Dendritic cell treated with granulocyte-macrophage colony-stimulating factor and Interleukin-4, amounts not matched to agents 40 ng/mL and 50 ng/mL, for 4 days (primary cell): ENCODE measurements at regions of chr16 and their contacts with region 1.

Region 1: DNA sequence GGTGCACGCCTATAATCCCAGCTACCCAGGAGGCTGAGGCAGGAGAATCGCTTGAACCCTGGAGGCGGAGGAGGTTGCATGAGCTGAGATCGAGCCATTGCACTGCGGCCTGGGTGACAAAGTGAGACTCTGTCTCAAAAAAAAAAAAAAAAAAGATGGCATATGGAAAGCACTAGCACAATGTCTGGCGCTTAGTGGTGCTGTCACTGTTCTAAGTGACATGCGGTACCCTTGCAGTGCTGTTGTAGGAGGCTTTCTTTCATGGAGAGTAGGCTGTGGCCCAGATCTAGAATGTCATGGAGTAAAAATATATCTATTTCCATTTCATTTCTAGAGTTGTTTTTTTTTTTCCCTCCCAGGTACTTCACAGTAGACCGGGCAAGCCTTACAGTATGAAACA is 14.6 kb upstream of the METTL9 start:
- H3K4me3 Mint-ChIP-seq: no peak overlapping the region
- H3K27ac Mint-ChIP-seq: no peak overlapping the region
- H3K4me1 Mint-ChIP-seq: peaks cover 30% of the 10 kb centered on the region
- H3K27me3 Mint-ChIP-seq: peaks cover under 1% of the 10 kb centered on the region

Region 2: DNA sequence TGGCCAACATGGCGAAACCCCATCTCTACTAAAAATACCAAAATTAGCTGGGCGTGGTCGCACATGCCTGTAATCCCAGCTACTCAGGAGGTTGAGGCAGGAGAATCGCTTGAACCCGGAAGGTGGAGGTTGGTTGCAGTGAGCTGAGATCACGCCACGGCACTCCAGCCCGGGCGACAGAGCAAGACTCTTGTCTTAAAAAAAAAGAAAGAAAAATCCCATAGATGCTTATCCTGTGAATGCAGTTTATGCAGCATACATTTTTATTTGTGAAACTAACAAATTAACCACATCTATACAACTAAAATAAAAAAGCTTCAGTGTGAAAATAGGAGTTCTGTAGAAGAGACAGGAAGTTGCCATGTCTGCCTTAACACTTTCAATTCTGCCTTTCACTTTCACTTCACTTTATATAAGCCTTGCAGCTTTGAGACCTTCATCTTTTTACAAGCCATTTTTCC is 60.5 kb after region 1 on chr16:
- intact Hi-C with region 1: loop called (anchors 1 kb)
- H3K4me3 Mint-ChIP-seq: peak overlapping the region; percentile 68
- H3K27ac Mint-ChIP-seq: peak overlapping the region; percentile 85
- H3K4me1 Mint-ChIP-seq: peaks cover 57% of the 10 kb centered on the region
- H3K27me3 Mint-ChIP-seq: no peaks in the 10 kb centered on the region

Region 3: DNA sequence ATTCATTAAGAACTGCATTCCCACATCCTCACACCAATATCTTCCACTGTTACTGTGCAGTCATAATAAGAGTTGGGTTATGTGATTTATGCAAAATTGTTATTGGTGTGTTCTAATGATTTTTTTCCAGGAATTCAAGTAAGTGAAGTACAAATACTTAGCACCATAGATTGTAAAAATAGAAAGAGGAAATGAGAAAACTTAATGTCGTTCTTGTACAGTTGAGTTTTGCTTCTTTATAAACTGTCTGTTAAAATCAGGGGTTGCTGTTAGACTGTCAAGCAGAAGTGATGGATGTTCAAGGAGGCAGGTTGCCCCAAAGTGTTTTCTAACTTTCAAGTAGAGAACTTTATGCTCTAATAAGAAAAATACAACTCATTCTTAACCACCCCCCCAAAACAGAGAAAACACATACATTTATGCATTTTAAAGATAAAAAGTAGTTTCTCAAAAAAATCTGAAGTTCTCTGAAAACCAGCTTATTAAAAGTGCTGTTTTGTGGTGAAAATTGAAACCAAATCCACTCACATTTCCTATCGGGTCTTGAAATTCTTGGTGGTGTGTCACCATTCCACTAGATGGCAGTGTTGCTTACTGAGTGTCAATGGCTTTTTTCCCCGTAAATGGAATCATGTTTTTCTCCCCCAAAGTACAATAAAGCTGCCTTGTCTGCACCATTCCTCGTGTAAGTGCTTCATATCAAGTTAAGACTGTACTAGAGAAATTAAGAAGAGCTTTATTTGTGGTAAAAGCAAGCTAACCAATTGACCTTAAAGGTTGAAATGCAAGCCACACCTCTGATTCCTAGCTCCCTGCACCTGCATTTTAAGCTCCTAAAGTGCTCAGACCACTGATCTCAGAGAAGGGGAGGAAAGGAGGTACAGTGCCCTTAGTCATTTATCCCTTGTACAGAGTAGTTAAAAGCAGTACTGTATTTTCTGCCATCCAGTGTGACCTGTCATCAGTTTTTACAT is 72.3 kb after region 1 on chr16:
- intact Hi-C with region 1: no loop called
- H3K4me3 Mint-ChIP-seq: peak overlapping the region; percentile 17
- H3K27ac Mint-ChIP-seq: peak overlapping the region; percentile 70
- H3K4me1 Mint-ChIP-seq: peaks cover 77% of the 10 kb centered on the region
- H3K27me3 Mint-ChIP-seq: no peaks in the 10 kb centered on the region

Region 4: DNA sequence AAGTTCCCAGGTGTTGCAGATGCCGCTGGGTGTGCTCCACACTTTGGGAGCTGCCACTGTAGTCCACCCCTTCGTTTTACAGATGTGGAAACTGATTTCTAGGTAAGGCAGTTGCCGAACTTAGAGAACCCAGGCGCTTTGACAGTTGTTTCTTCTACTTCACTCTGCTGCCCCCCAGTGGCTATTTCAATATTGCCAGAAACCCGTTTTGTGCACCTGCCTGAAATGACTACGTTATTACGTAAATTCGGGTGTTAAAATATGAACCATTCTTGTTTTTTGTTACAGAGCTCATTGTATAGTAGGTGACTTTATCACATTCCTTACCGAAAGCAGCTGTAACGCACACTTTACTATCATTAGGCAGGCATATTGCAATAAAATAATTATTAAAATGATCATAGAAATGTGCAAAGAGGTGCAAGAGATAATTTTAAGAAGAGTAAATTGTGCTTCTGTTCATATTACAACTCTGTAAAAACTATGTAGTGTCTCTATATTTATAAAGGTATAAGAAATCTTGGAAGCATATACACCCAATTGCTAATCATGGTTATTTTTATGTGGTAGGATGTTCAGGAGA is 123.8 kb after region 1 on chr16:
- intact Hi-C with region 1: loop called (anchors 1 kb)
- H3K4me3 Mint-ChIP-seq: no peak overlapping the region
- H3K27ac Mint-ChIP-seq: no peak overlapping the region
- H3K4me1 Mint-ChIP-seq: peaks cover 17% of the 10 kb centered on the region
- H3K27me3 Mint-ChIP-seq: no peaks in the 10 kb centered on the region